Caco-2 (cell line): ENCODE measurements at regions of chr7 and their contacts with region 1.

Region 1: GRCh38 chr7:140326116-140326928 is 72.0 kb downstream of the SLC37A3 start:
- DNase-seq: peak; percentile 56 to 70
- H3K4me3 ChIP-seq: no peak overlapping the region
- H3K4me3 Mint-ChIP-seq: no peak overlapping the region
- H3K27ac Mint-ChIP-seq: no peak overlapping the region
- H3K4me1 ChIP-seq: 0 out of 2 replicates have a peak, but pooled peaks cover 4% of the 10 kb centered on the region
- H3K4me1 Mint-ChIP-seq: no peaks in the 10 kb centered on the region
- H3K27me3 ChIP-seq: no peaks in the 10 kb centered on the region
- H3K27me3 Mint-ChIP-seq: no peaks in the 10 kb centered on the region
- CTCF ChIP-seq: peak; percentile 64 to 86

Region 2: GRCh38 chr7:139658908-139659675 is 667.2 kb before region 1 on chr7:
- CTCF ChIA-PET with region 1: no interaction called
- POLR2A ChIA-PET with region 1: no interaction called
- intact Hi-C with region 1: no loop called
- DNase-seq: no peak
- H3K4me3 ChIP-seq: no peak overlapping the region
- H3K4me3 Mint-ChIP-seq: no peak overlapping the region
- H3K27ac Mint-ChIP-seq: no peak overlapping the region
- H3K4me1 ChIP-seq: peaks cover 13% of the 10 kb centered on the region
- H3K4me1 Mint-ChIP-seq: peaks cover 35% of the 10 kb centered on the region
- H3K27me3 ChIP-seq: no peaks in the 10 kb centered on the region
- H3K27me3 Mint-ChIP-seq: no peaks in the 10 kb centered on the region
- CTCF ChIP-seq: no peak

Region 3: DNA sequence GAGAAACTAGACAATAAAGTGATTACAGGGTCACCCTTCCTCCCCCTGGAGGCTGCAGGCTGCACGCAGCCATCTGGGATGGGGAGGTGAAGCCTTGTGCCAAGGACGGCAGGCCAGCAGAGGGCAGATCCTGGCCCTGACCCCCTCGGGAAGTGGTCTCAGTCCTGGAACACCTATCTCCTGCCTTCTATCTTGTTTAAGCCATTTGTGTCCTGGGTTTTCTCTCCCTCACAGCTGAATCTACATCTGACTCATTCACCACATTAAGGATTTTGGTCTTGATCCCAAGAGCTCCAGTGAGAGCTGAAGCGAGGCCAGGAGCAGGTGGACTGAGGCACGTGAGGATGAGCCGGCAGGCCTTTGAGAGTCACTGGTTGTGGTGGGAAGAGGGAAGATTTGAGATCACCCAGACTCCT is 247.2 kb before region 1 on chr7:
- CTCF ChIA-PET with region 1: no interaction called
- POLR2A ChIA-PET with region 1: no interaction called
- intact Hi-C with region 1: loop called (anchors 5 kb)
- DNase-seq: peak; percentile 46 to 55
- H3K4me3 ChIP-seq: no peak overlapping the region
- H3K4me3 Mint-ChIP-seq: no peak overlapping the region
- H3K27ac Mint-ChIP-seq: no peak overlapping the region
- H3K4me1 ChIP-seq: no peaks in the 10 kb centered on the region; the same call in 1 of the 2 replicates
- H3K4me1 Mint-ChIP-seq: no peaks in the 10 kb centered on the region
- H3K27me3 ChIP-seq: no peaks in the 10 kb centered on the region; the same call in 1 of the 2 replicates
- H3K27me3 Mint-ChIP-seq: no peaks in the 10 kb centered on the region
- CTCF ChIP-seq: peak; percentile 35 to 80

Region 4: GRCh38 chr7:140297192-140297591 is 29.1 kb before region 1 on chr7:
- CTCF ChIA-PET with region 1: no interaction called
- POLR2A ChIA-PET with region 1: no interaction called
- intact Hi-C with region 1: loop called (anchors 1 kb)
- DNase-seq: peak; percentile 23 to 42
- H3K4me3 ChIP-seq: no peak overlapping the region
- H3K4me3 Mint-ChIP-seq: no peak overlapping the region
- H3K27ac Mint-ChIP-seq: no peak overlapping the region
- H3K4me1 ChIP-seq: no peaks in the 10 kb centered on the region; the same call in 1 of the 2 replicates
- H3K4me1 Mint-ChIP-seq: peaks cover 6% of the 10 kb centered on the region
- H3K27me3 ChIP-seq: no peaks in the 10 kb centered on the region
- H3K27me3 Mint-ChIP-seq: peaks cover 3% of the 10 kb centered on the region
- CTCF ChIP-seq: peak in 1 of 2 experiments; percentile 51